RWPE1 (cell line): ENCODE measurements at regions of chr3 and their contacts with region 1.

Region 1: DNA sequence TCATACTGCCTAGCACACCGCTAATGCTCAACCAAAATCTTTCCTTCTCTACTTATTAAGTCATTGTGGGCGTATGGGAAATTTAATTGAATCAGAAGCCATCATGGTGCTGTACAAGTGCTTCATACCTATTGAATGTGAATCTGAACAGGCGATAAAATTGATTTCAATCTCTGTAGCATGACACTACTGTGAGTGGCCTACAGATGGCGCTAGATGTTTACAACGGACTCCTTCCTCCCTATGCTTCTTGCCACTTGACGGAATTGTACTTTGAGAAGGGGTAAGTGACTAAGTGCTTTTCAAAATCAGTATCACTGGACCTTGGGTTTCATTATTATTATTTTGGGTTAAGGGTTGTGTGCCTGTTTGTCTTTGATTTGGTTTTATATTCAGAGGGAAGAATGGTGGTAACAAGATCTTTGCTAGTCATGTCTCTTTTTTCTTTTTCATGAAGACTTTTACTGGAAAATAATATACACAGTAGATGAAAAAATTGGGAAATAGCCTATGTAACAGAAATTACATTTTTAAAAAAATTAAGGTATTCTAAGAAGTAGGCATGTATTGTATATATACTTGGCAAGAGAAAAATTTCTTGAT is 35.4 kb downstream of the ACP3 start:
- DNase-seq: peak; percentile 68
- H3K27ac ChIP-seq: no peak overlapping the region
- CTCF ChIP-seq: peak; percentile 89

Region 2: DNA sequence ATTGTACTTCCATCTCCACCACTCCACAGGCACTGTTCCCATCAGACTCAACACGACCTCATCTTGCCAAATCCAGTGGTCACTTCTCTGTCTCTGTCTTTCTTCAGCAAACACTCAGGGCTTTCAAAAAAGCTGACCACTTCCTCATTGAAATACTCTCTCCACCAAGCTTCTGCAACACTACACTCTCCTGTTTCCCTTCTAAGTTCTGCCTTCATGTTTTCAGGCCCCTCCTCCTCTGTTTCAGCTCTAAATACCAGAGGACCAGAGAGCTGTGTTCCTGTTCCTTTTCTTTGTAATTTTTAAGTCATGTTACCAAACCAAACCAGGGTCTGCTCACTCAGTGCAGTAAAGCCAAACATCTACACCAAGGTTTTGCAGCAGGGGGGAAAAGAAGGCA is 69.2 kb before region 1 on chr3:
- CTCF ChIA-PET with region 1: no interaction called
- POLR2A ChIA-PET with region 1: no interaction called
- DNase-seq: no peak
- H3K27ac ChIP-seq: no peak overlapping the region
- CTCF ChIP-seq: no peak

Region 3: GRCh38 chr3:132399054-132399929 is 46.6 kb after region 1 on chr3:
- CTCF ChIA-PET with region 1: interaction called, 52 read pairs
- POLR2A ChIA-PET with region 1: no interaction called
- DNase-seq: peak; percentile 59
- H3K27ac ChIP-seq: no peak overlapping the region
- CTCF ChIP-seq: peak; percentile 80